PC-3 (cell line): ENCODE measurements at regions of chr10 and their contacts with region 1.

Region 1: GRCh38 chr10:58299580-58299979 is 30.6 kb downstream of the CISD1 start:
- DNase-seq: peak; percentile 88
- ATAC-seq: peak; percentile 93
- H3K4me3 ChIP-seq: no peak overlapping the region
- H3K27ac ChIP-seq: no peak overlapping the region
- H3K4me1 ChIP-seq: no peaks in the 10 kb centered on the region
- H3K27me3 ChIP-seq: no peaks in the 10 kb centered on the region
- CTCF ChIP-seq: peak; percentile 99

Region 2: GRCh38 chr10:58334817-58335305 is 35.3 kb after region 1 on chr10 and contains the start of gene UBE2D1:
- CTCF ChIA-PET with region 1: no interaction called
- POLR2A ChIA-PET with region 1: no interaction called
- intact Hi-C with region 1: loop called (anchors 2 kb)
- DNase-seq: peak; percentile 88
- ATAC-seq: peak; percentile 96
- H3K4me3 ChIP-seq: peak within 1 kb of the TSS; percentile 75
- H3K27ac ChIP-seq: peak within 1 kb of the TSS; percentile 8
- H3K4me1 ChIP-seq: peaks cover 15% of the 10 kb centered on the region
- H3K27me3 ChIP-seq: peaks cover 11% of the 10 kb centered on the region; the same call in 1 of the 2 replicates
- CTCF ChIP-seq: 0 out of 2 replicates have a peak, but pooled peaks have one; percentile 11
- total RNA-seq, gene UBE2D1: 13.6 and 13.8 TPM in 2 replicates

Region 3: GRCh38 chr10:58393317-58393716 is 93.7 kb after region 1 on chr10:
- CTCF ChIA-PET with region 1: interaction called, 11 read pairs
- POLR2A ChIA-PET with region 1: no interaction called
- intact Hi-C with region 1: loop called (anchors 1 kb)
- DNase-seq: peak; percentile 30
- ATAC-seq: peak; percentile 71
- H3K4me3 ChIP-seq: no peak overlapping the region
- H3K27ac ChIP-seq: no peak overlapping the region
- H3K4me1 ChIP-seq: no peaks in the 10 kb centered on the region
- H3K27me3 ChIP-seq: no peaks in the 10 kb centered on the region
- CTCF ChIP-seq: peak; percentile 45; the same call in 1 of the 2 replicates

Region 4: GRCh38 chr10:58531084-58531695 is 231.6 kb after region 1 on chr10:
- CTCF ChIA-PET with region 1: no interaction called
- POLR2A ChIA-PET with region 1: no interaction called
- intact Hi-C with region 1: loop called (anchors 5 kb)
- DNase-seq: peak; percentile 97
- ATAC-seq: peak; percentile 97
- H3K4me3 ChIP-seq: no peak overlapping the region
- H3K27ac ChIP-seq: no peak overlapping the region
- H3K4me1 ChIP-seq: no peaks in the 10 kb centered on the region
- H3K27me3 ChIP-seq: peaks cover 4% of the 10 kb centered on the region; the same call in 1 of the 2 replicates
- CTCF ChIP-seq: peak; percentile 93

Region 5: DNA sequence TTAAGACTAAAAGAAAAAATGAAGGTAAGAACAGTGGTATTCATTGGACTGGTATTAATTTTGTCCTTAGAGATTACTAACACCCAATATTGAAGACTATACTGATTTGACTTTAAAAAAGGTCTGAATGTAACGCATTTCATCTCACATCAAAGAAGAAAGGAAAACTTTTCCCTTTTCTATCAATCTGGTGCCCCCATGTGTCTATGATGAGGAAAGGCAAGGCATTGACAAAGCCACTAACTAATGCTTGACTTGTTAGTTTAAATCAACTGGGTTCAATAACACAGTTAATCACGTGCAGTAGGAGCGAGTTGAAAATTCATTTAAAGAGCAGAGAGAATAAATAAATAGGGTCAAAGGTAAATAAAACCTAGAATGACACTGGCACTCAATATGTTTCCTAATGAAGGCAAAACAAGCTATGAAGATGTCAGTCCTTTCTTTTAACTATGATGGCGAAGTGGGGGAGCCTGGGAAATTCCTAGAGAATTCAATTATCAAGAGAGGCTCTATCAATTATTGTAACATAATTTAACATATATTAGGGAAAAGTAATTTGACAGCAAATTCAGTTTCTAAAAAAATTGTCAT is 1909.2 kb after region 1 on chr10:
- CTCF ChIA-PET with region 1: no interaction called
- POLR2A ChIA-PET with region 1: no interaction called
- intact Hi-C with region 1: no loop called
- DNase-seq: peak; percentile 87
- ATAC-seq: peak; percentile 57
- H3K4me3 ChIP-seq: no peak overlapping the region
- H3K27ac ChIP-seq: no peak overlapping the region
- H3K4me1 ChIP-seq: peaks cover 22% of the 10 kb centered on the region
- H3K27me3 ChIP-seq: no peaks in the 10 kb centered on the region
- CTCF ChIP-seq: peak; percentile 100